ENCODE measurements at regions of chr5 and their contacts with region 1.

Region 1: GRCh38 chr5:139517683-139518564 is 35.4 kb upstream of the STING1 start:
- DNase-seq: peak; percentile 98

Region 2: DNA sequence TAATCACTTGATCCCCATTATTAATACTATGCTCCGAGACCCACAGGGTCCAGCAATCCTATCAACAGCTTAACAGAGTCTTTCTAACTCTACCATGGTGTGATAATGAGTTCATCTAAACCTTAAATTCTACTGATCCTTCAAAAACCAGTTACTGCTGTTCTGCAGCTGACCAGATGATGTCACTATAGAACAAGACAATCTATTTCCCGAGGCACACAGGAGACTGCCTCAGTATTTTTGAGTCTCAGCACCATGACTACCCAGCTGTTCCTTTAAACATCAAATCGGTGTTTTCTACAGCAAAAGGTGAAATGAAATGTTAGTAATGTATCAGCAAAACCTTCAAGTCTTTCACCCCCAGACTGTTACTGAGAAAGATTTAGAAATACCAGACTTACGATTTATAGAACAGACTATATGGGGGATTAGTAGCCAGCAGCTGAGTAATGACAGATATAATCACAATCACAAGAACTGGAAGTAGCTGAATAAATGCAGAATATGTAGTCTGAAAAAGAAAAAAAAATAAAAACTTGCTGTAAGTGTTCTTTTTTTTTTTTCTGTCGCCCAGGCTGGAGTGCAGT is 95.5 kb before region 1 on chr5:
- intact Hi-C with region 1: loop called (anchors 1 kb)
- DNase-seq: no peak

Region 3: DNA sequence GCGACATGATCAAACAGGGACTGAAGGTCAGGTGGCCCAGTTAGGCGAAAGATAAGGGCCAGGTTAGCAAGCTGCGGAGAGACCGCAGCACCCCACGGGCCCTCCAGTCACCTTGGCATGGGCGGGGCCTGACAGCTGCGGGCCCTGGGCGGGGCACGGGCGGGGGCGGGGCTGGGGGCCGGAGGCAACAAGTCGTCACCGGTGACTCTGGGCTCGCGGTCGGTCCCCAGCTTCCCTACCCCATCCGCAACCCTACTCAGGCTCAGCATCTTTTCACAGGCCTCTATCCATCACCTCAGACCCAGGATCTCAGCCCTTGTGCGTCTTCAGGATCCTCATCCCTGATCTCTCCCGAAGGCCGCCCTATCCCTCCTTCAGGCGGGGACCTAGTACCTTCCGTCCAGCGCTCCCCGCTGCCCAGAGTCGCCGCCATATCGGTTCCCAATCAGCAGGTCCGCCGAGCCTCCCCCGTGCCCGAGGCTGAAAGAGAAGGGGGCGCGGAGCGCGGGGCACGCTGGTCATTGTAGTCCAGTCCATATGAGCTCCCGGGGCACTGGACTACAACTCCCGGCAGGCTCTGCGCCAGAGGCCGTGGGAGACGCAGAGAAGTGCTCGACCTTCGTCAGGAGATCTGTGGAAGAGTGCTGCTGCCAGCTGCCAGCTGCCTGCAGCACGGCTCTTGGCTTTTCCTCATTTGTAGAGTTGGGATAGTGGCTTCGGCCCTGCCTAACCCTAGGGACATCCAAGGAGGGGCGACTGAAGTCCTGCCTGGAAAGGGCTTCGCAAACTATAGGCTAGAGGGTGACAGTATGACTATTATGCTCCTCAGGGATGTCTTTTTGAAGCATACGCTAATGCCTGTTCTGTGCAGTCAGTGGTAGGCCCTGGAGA is 78.7 kb before region 1 on chr5 and contains the start of gene DNAJC18:
- intact Hi-C with region 1: loop called (anchors 5 kb)
- DNase-seq: peak; percentile 97
- total RNA-seq, gene DNAJC18: 20.3 TPM

Region 4: GRCh38 chr5:139482050-139482889 is 35.7 kb before region 1 on chr5 and contains the start of gene STING1:
- intact Hi-C with region 1: loop called (anchors 2 kb)
- DNase-seq: peak; percentile 88
- total RNA-seq, gene STING1: 85.3 TPM